Mammary epithelial cell (primary cell): ENCODE measurements at regions of chr12 and their contacts with region 1.

Region 1: GRCh38 chr12:104865080-104865479 is 93.0 kb downstream of the SLC41A2 start:
- DNase-seq: peak; percentile 7
- H3K4me3 ChIP-seq: no peak overlapping the region
- H3K27ac ChIP-seq: no peak overlapping the region
- H3K4me1 ChIP-seq: peaks cover 6% of the 10 kb centered on the region
- H3K27me3 ChIP-seq: no peaks in the 10 kb centered on the region
- CTCF ChIP-seq: no peak

Region 2: GRCh38 chr12:104177663-104178501 is 687.2 kb before region 1 on chr12:
- CTCF ChIA-PET with region 1: no interaction called
- dilution Hi-C with region 1: no loop called
- in situ Hi-C with region 1: loop called in 1 of 2 experiments (anchors 25 kb)
- intact Hi-C with region 1: no loop called
- DNase-seq: peak; percentile 88
- H3K4me3 ChIP-seq: no peak overlapping the region
- H3K27ac ChIP-seq: peak overlapping the region; percentile 5
- H3K4me1 ChIP-seq: peaks cover 36% of the 10 kb centered on the region
- H3K27me3 ChIP-seq: no peaks in the 10 kb centered on the region
- CTCF ChIP-seq: peak; percentile 42 to 61

Region 3: DNA sequence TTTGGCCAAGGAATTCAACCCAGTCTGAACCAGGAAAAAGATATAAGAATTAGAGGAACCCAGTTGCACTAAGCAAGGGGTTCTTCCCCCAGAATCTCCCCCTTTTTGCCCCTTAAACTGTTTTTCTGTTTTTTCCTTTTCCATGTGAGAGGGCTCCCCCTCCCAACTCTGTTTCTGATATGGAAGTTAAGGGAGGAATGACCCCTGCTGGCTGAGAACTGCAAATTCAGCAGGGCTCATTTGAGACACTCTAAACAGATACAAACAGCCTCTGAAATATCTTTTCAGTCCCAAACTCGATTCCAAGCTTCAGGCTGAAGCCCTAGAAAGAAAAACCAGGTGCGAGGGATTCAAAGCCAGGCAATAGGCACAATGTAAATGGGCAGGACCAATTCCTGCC is 39.7 kb before region 1 on chr12:
- CTCF ChIA-PET with region 1: no interaction called
- dilution Hi-C with region 1: no loop called
- in situ Hi-C with region 1: no loop called
- intact Hi-C with region 1: no loop called
- DNase-seq: peak; percentile 14
- H3K4me3 ChIP-seq: no peak overlapping the region
- H3K27ac ChIP-seq: no peak overlapping the region
- H3K4me1 ChIP-seq: no peaks in the 10 kb centered on the region
- H3K27me3 ChIP-seq: no peaks in the 10 kb centered on the region
- CTCF ChIP-seq: peak; percentile 26 to 42

Region 4: DNA sequence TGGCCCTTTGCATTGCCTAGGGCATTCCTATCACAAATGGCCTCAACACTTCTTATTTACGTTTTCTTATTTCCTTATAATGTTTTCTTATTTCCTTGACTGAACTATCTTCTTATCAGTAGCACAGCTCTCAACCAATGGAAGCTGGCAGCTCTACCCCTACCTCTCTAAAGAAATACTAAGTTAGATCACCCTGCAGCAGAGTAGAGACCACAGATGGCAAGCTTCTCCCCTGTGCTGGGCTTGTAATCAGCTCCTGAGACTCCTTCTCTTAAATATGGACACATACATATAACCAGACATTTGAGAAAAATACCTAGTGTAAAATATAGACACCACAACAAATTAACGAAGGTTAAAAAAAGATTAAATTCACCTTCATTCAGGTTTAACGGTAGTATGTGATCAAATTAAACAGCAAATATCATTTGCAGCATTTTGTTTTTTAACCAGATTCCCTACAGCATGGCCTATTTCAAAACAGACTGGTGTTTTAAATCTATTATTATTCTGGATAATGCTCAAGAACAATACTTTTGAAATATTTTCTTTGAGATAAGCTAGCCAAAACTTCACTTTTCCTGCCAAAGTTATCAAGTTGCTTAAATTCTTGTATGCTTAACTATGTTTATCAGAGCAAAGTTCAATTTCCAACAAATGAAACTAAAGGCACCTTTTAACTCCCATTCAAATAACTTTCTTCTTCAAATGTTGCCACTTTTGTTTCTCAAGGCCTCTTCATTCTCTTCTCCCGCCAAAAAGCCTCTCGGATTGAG is 38.8 kb after region 1 on chr12:
- CTCF ChIA-PET with region 1: no interaction called
- dilution Hi-C with region 1: no loop called
- in situ Hi-C with region 1: no loop called
- intact Hi-C with region 1: no loop called
- DNase-seq: no peak
- H3K4me3 ChIP-seq: no peak overlapping the region
- H3K27ac ChIP-seq: no peak overlapping the region
- H3K4me1 ChIP-seq: no peaks in the 10 kb centered on the region
- H3K27me3 ChIP-seq: no peaks in the 10 kb centered on the region
- CTCF ChIP-seq: no peak